CD8-positive, alpha-beta memory T cell (primary cell): ENCODE measurements at regions of chr10 and their contacts with region 1.

Region 1: DNA sequence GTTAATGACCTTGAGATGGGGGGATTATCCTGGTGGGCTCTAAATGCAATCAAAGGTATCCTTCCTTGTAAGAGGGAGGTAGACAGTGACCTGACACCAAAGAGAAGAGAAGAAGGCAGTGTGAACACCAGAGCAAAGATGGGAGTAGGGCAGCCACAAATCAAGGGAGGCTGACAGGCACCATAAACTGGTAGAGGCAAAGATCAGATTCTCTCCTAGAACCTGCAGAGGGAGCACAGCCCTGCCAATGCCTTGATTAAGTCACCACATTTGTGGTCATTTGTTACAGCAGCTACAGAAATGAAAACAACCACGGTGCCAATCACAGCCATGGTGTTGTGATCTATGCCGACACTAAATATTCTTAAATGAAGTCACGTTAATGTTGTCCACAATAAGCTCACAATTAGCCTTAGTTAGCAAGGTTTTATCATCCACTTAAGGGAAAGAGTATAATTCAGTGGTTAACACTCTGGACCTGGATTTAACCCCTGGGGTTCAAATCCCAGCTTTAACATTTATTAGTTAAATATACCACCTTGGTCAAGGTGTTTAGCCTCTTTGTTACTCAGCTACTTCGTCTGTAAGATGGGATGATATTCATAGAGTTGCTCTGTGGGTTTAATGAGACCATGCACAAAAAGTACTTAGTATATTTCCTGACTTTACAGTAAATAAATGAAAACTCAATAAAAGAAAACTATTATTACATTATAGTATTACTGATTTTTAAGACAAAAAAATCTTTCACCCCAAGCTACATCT is 70.8 kb downstream of the SGMS1 start:
- DNase-seq: peak; percentile 20 to 65 (median 29)
- H3K4me3 ChIP-seq: no peak overlapping the region
- H3K4me3 Mint-ChIP-seq: peak overlapping the region in 2 of 7 donors; percentile 1 to 4
- H3K27ac ChIP-seq: no peak overlapping the region
- H3K27ac Mint-ChIP-seq: peak overlapping the region in 1 of 8 donors; percentile 65
- H3K4me1 ChIP-seq: peaks cover 3% of the 10 kb centered on the region
- H3K4me1 Mint-ChIP-seq: peaks cover 29 to 55% (median 48%) of the 10 kb centered on the region in 3 donors
- H3K27me3 ChIP-seq: no peaks in the 10 kb centered on the region
- H3K27me3 Mint-ChIP-seq: no peaks in the 10 kb centered on the region

Region 2: DNA sequence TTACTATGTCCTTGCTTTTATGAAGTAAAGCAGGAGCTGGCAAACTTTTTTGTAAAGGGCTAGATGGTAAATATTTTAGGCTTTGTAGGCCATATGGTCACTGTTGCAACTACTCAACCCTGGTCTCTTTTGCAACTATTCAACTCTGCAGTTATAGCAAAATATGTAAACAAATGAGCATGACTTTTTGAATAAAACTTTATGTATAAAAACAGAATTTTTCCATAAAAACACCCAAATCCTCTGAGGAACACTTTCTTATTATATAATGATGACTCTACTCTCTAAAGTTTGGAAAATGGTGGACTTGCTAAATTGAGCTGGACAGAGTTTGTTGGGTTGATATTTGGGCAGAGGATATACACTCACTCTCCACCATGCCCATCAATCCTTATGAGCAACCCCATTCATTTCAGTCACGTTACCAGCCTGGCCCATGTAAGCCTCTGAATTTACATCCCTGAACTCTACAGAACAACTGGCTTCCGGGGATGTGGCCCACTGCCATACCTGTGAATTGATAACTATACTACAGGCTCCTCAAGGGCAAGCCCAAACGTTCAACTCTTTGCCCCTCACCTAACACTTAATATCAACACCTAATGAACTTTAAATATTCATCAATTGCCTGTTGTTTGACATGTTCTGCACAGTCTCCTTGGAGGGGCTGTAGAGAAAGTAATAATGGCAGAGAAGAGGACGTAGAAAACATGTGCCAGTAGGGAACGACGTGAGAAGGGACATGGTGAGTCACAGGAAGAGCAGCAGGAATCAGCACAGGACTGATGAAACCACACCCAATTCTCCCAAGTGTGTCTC is 33.2 kb after region 1 on chr10:
- CTCF ChIA-PET with region 1: no interaction called
- POLR2A ChIA-PET with region 1: interaction called, 11 read pairs
- DNase-seq: no peak
- H3K4me3 ChIP-seq: no peak overlapping the region
- H3K4me3 Mint-ChIP-seq: no peak overlapping the region
- H3K27ac ChIP-seq: no peak overlapping the region
- H3K27ac Mint-ChIP-seq: no peak overlapping the region
- H3K4me1 ChIP-seq: peaks cover 9% of the 10 kb centered on the region
- H3K4me1 Mint-ChIP-seq: peaks cover 29 to 60% (median 38%) of the 10 kb centered on the region in 3 donors
- H3K27me3 ChIP-seq: no peaks in the 10 kb centered on the region
- H3K27me3 Mint-ChIP-seq: no peaks in the 10 kb centered on the region